SK-N-SH (cell line): ENCODE measurements at regions of chr1 and their contacts with region 1.

Region 1: DNA sequence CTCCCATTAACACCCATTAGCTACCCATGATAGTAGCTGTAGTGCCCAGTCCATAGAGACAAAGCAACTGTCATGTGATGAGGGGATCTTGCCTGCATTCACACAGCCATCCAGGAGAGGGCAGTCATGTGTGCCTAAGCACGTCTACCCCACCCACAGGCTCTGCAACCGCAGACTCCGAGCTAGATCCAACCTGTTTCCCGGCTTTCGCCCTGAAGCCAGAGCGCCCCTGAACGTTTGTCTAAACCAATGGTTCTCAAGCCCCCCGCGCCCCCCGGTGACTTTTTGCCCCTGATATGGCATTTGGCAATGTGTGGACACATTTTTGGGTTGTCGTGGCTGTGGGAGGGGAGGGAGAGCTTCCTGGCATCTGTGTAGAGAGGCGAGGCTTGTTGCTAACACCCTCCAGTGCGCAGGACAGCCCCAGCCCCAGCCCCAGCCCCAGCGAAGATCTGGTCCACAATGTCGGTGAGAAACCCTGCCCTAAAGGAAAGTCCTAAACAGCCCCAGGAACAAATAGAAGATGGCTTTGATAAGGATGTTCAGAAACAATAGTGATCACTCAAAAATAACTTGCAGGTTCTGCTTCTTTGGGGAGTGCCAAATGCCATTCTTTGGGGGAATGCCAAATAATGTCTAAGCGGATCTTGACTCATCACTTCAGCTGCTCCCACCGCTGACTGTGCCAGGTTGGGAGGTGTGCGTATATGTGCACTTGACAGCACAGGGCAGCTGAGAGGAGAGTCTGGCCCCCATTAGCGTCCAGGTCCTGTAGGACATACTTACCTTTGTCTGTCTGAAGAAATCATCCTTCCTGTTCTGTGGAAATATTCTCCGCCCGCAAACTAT is 34.5 kb downstream of the SLC44A3 start:
- DNase-seq: peak; percentile 89
- H3K4me3 ChIP-seq: peak overlapping the region; percentile 49 to 60
- H3K27ac ChIP-seq: peak overlapping the region; percentile 78 to 93
- H3K4me1 ChIP-seq: peaks cover 11 to 17% of the 10 kb centered on the region in 2 experiments; a peak in 3 of 4 replicates
- H3K27me3 ChIP-seq: no peaks in the 10 kb centered on the region
- CTCF ChIP-seq: peak; percentile 93
- EP300 ChIP-seq: peak in 1 of 2 experiments; percentile 78; a peak in 2 of 4 replicates
- RAD21 ChIP-seq: peak; percentile 93

Region 2: GRCh38 chr1:94805912-94806311 is 48.8 kb before region 1 on chr1:
- CTCF ChIA-PET with region 1: interaction called, 22 read pairs
- POLR2A ChIA-PET with region 1: no interaction called
- DNase-seq: peak; percentile 63
- H3K4me3 ChIP-seq: no peak overlapping the region
- H3K27ac ChIP-seq: no peak overlapping the region
- H3K4me1 ChIP-seq: peaks cover 6 to 29% of the 10 kb centered on the region in 2 experiments; a peak in 3 of 4 replicates
- H3K27me3 ChIP-seq: no peaks in the 10 kb centered on the region
- CTCF ChIP-seq: peak; percentile 97
- EP300 ChIP-seq: no peak
- RAD21 ChIP-seq: peak; percentile 97

Region 3: GRCh38 chr1:94832446-94832845 is 22.2 kb before region 1 on chr1:
- CTCF ChIA-PET with region 1: interaction called, 16 read pairs
- POLR2A ChIA-PET with region 1: no interaction called
- DNase-seq: no peak
- H3K4me3 ChIP-seq: no peak overlapping the region
- H3K27ac ChIP-seq: no peak overlapping the region
- H3K4me1 ChIP-seq: peaks cover 0 to 3% of the 10 kb centered on the region in 2 experiments; a peak in 1 of 4 replicates
- H3K27me3 ChIP-seq: no peaks in the 10 kb centered on the region
- CTCF ChIP-seq: no peak
- EP300 ChIP-seq: no peak
- RAD21 ChIP-seq: no peak

Region 4: DNA sequence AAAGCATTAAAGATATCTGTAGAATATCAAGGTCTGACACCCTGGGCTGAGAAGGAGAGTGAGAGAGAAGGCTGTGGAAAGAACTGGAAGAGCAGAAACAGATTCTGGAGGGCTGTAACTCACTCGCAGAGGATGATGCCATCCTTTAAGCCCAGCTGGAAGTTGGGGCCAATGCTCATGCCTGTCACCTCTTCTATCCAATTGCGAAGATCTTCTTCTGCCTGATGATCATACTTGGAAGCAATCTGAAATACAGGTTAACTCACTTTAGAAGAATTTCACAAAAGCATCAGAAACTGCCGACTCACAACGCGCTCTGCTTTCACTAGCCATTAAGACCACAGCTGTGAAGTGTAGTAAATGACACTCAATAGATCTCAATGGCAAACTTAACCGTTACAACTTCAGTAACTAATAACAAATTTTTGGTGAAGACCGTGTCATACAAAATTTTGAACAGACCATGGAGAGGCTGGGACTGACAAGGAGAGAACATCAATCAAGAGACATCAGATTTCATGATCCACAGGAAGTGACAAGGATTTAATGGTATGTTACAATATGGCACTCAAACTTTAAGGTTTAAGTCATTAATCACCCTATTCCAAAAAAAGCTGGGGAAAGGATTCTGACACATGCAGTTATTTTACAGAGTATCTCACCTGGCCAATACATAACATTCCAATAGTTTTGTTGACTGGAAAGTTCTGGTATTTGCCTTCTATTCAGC is 48.8 kb after region 1 on chr1:
- CTCF ChIA-PET with region 1: interaction called, 19 read pairs
- POLR2A ChIA-PET with region 1: no interaction called
- DNase-seq: no peak
- H3K4me3 ChIP-seq: no peak overlapping the region
- H3K27ac ChIP-seq: peak overlapping the region; percentile 33 to 34; a peak in 3 of 4 replicates
- H3K4me1 ChIP-seq: peaks cover 12 to 35% of the 10 kb centered on the region in 2 experiments; a peak in 3 of 4 replicates
- H3K27me3 ChIP-seq: no peaks in the 10 kb centered on the region
- CTCF ChIP-seq: no peak
- EP300 ChIP-seq: no peak
- RAD21 ChIP-seq: no peak

Region 5: GRCh38 chr1:94926915-94927404 is 72.3 kb after region 1 on chr1 and contains the start of gene CNN3:
- CTCF ChIA-PET with region 1: interaction called, 36 read pairs
- POLR2A ChIA-PET with region 1: interaction called, 7 read pairs
- DNase-seq: peak; percentile 98
- H3K4me3 ChIP-seq: peak within 1 kb of the TSS; percentile 96 to 98
- H3K27ac ChIP-seq: peak within 1 kb of the TSS; percentile 97 to 98
- H3K4me1 ChIP-seq: peaks cover 29 to 42% of the 10 kb centered on the region in 2 experiments
- H3K27me3 ChIP-seq: no peaks in the 10 kb centered on the region
- CTCF ChIP-seq: no peak
- EP300 ChIP-seq: no peak
- RAD21 ChIP-seq: no peak; the same call in 1 of the 2 replicates
- polyA plus RNA-seq, gene CNN3: 204 and 242 TPM in 2 replicates

Region 6: DNA sequence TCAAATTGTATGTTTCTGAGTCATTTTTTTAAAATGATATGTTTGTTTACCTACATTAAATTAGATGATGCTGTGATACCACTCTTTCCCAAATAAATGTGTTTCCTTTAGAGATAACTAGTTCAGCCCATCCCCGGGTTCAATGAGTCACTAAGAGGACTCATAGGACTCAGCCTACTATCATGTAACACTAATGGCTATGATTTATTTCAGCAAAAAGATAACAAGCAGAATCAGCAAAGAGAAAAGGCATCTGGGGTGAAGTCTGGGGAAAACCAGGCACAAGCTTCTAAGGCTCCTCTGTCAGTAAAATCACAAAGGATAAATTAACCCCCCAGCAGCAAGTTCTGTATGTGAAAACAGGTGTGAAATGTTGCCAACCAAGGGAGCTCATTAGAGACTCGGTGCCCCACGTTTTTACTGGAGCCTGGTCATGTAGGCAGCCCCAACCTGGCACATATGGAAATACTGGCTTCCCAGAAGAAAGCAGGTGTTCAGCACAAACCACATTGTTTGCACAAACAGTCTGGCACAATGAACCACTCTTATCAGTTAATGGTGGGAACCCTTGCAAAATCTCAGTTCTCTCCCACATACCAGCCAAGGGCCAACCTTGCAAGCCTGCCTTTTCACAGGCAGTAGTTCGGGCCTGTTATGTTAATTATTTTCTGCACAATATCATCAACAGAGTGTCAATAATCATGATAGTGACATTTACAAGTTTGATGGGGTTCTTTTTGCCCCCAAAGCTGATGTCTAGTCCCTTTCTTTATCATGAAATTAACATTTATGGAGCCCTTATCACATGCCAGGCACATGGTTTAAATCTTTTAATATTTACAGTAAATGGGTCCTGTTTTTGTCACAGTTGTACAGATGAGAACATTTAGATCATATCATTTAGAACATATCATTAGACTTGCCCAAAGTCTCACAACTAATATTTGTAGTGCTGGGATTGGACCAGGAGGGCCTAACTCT is 95.3 kb after region 1 on chr1:
- CTCF ChIA-PET with region 1: interaction called, 27 read pairs
- POLR2A ChIA-PET with region 1: interaction called, 5 read pairs
- DNase-seq: peak; percentile 68
- H3K4me3 ChIP-seq: no peak overlapping the region
- H3K27ac ChIP-seq: peak overlapping the region; percentile 46 to 99; a peak in 3 of 4 replicates
- H3K4me1 ChIP-seq: peaks cover 0 to 38% of the 10 kb centered on the region in 2 experiments; a peak in 2 of 4 replicates
- H3K27me3 ChIP-seq: no peaks in the 10 kb centered on the region
- CTCF ChIP-seq: no peak
- EP300 ChIP-seq: peak; percentile 64 to 98; a peak in 2 of 4 replicates
- RAD21 ChIP-seq: peak; percentile 21; the same call in 1 of the 2 replicates

Region 7: DNA sequence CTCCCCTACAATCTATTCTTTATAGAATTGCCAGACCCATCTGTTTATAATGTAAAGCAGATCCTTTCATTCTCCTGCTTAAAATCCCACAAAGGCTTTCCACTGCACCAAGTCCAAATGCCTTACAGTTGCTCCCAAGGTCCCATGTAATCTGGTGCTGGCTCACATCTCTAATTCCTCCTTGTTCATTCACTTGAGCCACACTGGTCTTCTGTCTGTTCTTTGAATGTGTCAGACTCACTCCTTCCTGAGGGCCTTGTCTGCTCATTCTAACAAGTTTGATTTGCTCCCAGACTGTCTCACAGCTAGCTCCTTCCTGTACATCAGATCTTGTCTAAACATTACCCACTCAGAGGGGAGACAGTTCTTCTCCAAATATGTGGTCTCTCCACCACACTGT is 179.2 kb after region 1 on chr1:
- CTCF ChIA-PET with region 1: interaction called, 39 read pairs
- POLR2A ChIA-PET with region 1: no interaction called
- DNase-seq: no peak
- H3K4me3 ChIP-seq: no peak overlapping the region
- H3K27ac ChIP-seq: peak overlapping the region; percentile 40 to 90
- H3K4me1 ChIP-seq: peaks cover 6 to 19% of the 10 kb centered on the region in 2 experiments; a peak in 3 of 4 replicates
- H3K27me3 ChIP-seq: no peaks in the 10 kb centered on the region
- CTCF ChIP-seq: no peak
- EP300 ChIP-seq: no peak
- RAD21 ChIP-seq: no peak